Posterior vena cava (tissue), 2 donors: ENCODE measurements at regions of chr4 and their contacts with region 1.

Region 1: DNA sequence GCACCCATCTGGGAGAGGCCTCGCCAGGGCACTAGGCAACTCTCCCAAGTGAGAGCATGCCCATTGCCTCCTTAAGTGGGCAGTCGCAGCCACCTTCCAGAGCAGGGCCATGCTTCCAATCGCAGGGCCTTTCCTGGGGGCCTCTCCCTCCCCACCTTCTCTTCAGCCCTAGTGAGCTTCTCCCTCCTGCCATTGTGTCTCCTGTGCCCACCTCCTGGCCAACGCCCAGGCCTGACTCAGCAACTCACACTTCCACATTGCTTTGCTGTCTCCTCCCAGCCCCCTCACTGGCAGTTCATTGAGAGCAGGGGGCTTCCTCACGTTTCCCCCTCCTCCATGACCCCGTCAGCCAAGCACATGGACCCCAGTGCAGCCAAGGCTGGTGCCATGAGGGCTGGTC is 25.9 kb downstream of the HTRA3 start:
- DNase-seq: peak; percentile 35

Region 2: DNA sequence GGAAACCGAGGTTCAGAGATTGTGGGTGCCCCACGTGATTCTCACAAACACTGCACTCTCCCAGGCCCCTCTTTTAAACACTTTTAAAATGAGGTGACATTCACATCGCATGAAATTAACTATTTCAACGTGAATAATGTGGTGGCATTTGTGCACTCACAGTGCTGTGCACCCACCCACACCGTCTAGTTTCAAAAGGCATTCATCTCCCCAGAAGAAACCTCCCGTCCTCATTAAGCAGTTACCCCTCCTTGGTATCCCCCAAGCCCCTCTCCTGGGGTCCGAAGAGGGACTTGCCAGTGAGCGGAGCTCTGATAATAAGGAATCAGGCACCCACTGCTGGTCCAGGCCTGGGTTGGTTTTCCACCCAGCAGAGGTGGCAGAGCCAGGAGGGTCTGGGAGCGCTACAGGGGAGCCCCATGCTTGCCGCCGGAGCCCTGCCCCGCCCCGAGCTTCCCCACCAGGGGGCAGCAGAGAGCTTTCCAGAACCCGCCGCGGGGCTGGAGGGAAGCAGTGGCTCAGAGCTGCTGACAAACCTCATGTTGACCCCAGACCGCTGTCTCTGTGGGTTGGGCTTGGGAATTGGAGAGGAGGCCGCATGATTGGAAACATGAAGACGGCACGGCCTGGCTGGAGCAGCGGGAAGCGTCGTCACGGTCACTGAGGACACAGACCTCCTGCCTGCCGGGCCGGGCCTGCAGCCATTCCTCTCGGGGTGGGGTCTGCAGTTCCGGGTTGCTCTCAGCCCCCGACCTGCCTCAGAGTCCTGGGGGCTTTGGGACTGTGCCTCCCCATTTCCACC is 53.3 kb before region 1 on chr4:
- intact Hi-C with region 1: loop called in 1 of 2 experiments (anchors 2 kb)
- DNase-seq: peak; percentile 97